A673 (cell line): ENCODE measurements at regions of chr10 and their contacts with region 1.

Region 1: GRCh38 chr10:102009801-102010425 is 46.1 kb downstream of the ARMH3 start:
- DNase-seq: peak; percentile 88
- H3K4me3 ChIP-seq: no peak overlapping the region
- H3K27ac ChIP-seq: no peak overlapping the region
- H3K4me1 ChIP-seq: no peaks in the 10 kb centered on the region
- H3K27me3 ChIP-seq: no peaks in the 10 kb centered on the region
- CTCF ChIP-seq: peak; percentile 89

Region 2: GRCh38 chr10:101835064-101835761 is 174.7 kb before region 1 on chr10:
- CTCF ChIA-PET with region 1: interaction called, 71 read pairs
- POLR2A ChIA-PET with region 1: no interaction called
- intact Hi-C with region 1: loop called (anchors 1 kb)
- DNase-seq: no peak
- H3K4me3 ChIP-seq: no peak overlapping the region
- H3K27ac ChIP-seq: no peak overlapping the region
- H3K4me1 ChIP-seq: peaks cover 16% of the 10 kb centered on the region
- H3K27me3 ChIP-seq: no peaks in the 10 kb centered on the region
- CTCF ChIP-seq: no peak

Region 3: DNA sequence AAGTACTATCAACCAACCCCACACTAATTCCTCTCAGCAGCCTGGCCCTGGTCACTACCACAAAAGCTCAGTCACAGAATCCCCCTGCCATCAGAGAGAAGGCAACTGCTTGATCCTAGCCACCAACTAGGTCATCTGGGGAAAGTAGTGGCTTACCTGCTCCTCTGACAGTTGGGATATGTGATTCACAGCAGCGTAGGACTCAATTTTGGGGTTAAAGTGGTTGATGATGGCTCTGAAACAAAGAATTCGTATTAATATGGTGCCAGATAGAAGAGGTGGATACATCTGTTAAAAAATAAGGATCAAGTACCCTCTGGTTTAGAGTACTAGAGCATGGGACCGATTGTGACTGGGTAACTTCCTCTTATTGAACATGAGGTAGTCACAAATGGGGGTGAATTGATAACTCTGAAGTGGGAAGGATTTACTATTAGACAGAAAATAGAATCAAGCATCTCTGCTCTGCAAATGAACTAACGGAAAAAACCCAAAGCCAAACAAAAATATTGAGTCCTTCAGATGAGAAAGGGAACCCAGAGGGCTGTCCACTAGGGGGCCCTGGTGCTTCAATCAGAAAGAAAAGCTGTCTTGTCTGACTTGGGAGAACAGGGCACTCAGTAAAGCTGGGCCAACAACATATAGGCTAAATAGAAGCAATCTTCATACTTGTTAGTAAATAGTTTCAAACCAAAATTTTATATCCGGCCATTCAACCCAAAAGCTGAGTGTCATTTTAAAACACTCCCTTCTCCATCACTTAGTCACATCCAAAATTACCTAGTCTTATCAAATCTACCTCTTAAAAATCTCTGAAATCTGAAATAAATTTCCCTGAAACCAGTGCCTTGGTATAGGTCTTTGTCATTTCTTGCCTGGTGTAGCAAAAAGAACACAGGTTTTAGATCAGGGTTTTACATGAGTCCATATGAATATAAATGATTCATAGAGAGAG is 120.4 kb before region 1 on chr10:
- CTCF ChIA-PET with region 1: interaction called, 26 read pairs
- POLR2A ChIA-PET with region 1: no interaction called
- intact Hi-C with region 1: loop called (anchors 2 kb)
- DNase-seq: peak; percentile 83
- H3K4me3 ChIP-seq: no peak overlapping the region
- H3K27ac ChIP-seq: no peak overlapping the region
- H3K4me1 ChIP-seq: no peaks in the 10 kb centered on the region
- H3K27me3 ChIP-seq: no peaks in the 10 kb centered on the region
- CTCF ChIP-seq: peak; percentile 94

Region 4: GRCh38 chr10:101961591-101962498 is 48.1 kb before region 1 on chr10:
- CTCF ChIA-PET with region 1: no interaction called
- POLR2A ChIA-PET with region 1: no interaction called
- intact Hi-C with region 1: loop called (anchors 10 kb)
- DNase-seq: no peak
- H3K4me3 ChIP-seq: no peak overlapping the region
- H3K27ac ChIP-seq: no peak overlapping the region
- H3K4me1 ChIP-seq: peaks cover 6% of the 10 kb centered on the region
- H3K27me3 ChIP-seq: no peaks in the 10 kb centered on the region
- CTCF ChIP-seq: no peak